GM13976 (cell line): ENCODE measurements at regions of chr11 and their contacts with region 1.

Region 1: DNA sequence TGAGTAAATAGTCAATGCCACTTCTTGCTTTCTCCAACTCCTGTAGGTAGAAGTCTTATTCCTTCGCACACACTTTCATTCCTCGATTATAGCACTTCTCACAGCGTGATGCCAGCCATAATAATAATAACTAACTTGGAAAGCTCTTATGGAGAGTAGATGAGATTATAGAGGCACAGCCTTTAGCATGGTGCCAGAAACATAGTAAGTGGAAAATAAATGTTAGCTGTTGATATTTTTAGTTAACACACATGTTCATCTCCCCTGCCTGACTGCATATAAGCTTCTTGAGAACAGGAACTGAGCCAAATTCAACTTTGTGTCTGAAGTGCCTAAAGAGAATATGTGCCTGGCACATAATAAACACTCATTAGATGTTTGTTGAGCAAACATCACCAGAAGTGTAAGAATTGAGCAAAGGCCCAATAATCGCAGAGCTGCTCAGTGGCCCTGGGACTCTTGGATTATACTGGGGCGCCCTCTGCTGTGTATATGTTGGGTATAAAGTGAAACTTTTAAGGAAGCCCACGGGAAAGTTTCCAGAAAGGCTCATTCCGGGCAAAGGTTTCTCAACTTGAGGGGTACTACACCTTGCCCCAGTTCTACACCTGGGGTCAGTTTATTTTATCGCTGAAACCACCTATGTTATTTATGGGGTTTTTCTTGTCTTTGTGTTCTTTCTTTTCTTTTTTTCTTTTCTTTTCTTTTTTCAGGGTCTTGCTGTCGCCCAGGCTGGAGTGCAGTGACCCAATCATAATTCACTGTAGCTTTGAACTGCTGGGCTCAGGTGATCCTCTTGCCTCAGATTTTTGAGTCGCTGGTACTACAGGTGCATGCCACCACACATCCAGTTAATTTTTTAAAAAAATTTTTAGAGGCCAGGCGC is 22.3 kb downstream of the SLN start:
- DNase-seq: peak; percentile 58
- CTCF ChIP-seq: peak; percentile 41

Region 2: DNA sequence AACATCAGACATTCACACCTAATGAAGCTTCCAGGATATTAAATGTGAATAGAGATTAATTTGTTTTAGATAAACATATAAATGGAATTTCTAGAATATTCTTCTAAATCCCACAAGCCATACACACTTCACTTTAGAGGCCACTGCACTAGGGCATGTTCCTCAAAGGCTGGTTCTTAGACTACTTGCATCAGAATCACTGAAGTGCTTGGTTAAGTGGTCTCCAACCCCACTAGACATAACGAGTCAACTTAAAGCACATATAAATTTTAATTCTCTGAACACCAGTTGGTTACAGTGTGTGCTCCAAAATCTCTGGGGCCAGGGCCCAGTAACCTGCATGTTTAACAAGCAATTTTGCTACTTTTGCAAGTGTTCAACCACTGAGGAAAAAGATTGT is 116.1 kb before region 1 on chr11:
- in situ Hi-C with region 1: loop called (anchors 10 kb)
- DNase-seq: no peak
- CTCF ChIP-seq: no peak